ENCODE measurements at regions of chr3 and their contacts with region 1.

Region 1: GRCh38 chr3:28348629-28349483 is at the starts of genes AZI2 and ZCWPW2:
- DNase-seq: peak; percentile 89
- ATAC-seq: peak; percentile 91
- H3K4me3 ChIP-seq: peak within 1 kb of the TSS; percentile 76 to 94 (median 93)
- H3K27ac ChIP-seq: peak within 1 kb of the TSS; percentile 96
- H3K4me1 ChIP-seq: peaks cover 36% of the 10 kb centered on the region
- H3K27me3 ChIP-seq: no peaks in the 10 kb centered on the region
- CTCF ChIP-seq: peak; percentile 61
- EP300 ChIP-seq: no peak
- POLR2A ChIP-seq: peak; percentile 73 to 75
- RAD21 ChIP-seq: no peak; the same call in 1 of the 2 replicates
- total RNA-seq, gene AZI2: 43.7 and 48.4 TPM in 2 replicates
- total RNA-seq, gene ZCWPW2: 0.46 and 0.53 TPM in 2 replicates

Region 2: DNA sequence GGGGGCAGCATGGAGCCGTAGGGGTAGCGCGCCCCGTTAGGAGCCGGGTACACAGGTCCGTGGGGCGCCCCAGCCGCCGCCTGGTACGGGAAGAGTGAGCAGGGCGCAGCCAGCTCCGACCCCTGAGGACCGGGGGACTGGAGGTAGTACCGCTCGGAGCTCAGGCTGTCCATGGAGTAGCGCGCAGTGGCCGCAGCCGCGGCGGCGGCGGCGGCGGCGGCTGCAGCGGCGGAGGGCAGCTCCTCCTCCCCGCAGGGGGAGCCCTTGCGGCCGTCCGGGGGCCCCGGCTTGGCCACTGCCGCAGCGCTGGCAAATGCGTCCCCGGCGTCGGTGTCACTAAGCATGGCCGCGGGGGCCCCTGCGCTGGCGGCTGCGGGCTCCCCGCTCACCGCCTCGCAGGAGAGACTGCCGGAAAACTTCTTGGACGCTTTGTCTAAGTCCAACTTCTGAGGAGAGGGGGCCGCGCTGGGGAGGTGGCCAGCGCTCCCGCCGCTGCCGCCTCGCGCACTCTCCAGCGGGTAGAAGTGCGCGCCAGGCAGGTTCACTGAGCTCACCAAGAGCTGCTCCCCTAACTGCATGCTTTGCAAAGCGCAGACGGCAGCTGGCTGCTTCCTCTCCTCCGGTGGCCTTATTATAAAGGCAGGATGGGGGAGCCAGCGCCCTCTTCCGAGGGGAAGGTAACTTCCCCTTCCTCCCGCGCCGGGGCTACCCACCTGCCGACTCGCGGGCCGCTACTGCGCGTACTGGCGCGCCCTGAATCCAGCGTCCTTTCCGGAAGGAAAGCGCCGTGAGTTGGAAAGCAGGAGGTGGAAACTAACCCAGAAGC is 626.9 kb before region 1 on chr3 and contains the start of gene EOMES:
- CTCF ChIA-PET with region 1: no interaction called
- POLR2A ChIA-PET with region 1: interaction called, 11 read pairs
- in situ Hi-C with region 1: no loop called
- intact Hi-C with region 1: no loop called
- DNase-seq: peak; percentile 30
- ATAC-seq: peak; percentile 92
- H3K4me3 ChIP-seq: peak within 1 kb of the TSS; percentile 65 to 69 (median 66)
- H3K27ac ChIP-seq: no peak within 1 kb of the TSS
- H3K4me1 ChIP-seq: peaks cover 33% of the 10 kb centered on the region
- H3K27me3 ChIP-seq: peaks cover 5 to 69% of the 10 kb centered on the region in 2 experiments
- CTCF ChIP-seq: peak; percentile 64
- EP300 ChIP-seq: no peak
- POLR2A ChIP-seq: no peak
- RAD21 ChIP-seq: peak; percentile 76
- total RNA-seq, gene EOMES: 0.11 and 0.28 TPM in 2 replicates

Region 3: DNA sequence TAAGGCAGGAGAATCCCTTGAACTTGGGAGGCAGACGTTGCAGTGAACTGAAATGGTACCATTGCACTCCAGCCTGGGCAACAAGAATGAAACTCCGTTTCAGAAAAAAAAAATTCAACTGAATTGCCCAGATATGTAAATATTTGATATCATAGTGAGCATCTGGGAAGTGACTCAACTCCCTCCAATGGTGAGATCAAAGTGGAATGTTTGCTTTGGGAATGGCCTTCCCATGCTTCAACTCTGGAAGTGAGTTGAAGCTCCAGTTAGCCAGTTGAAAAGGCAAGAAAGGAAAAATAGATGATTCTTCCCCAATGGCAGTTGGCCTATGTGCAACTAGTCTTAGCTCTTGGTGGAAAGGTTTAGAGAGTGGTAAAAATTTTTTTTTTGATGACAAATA is 239.0 kb before region 1 on chr3:
- CTCF ChIA-PET with region 1: no interaction called
- POLR2A ChIA-PET with region 1: interaction called, 6 read pairs
- in situ Hi-C with region 1: no loop called
- intact Hi-C with region 1: loop called (anchors 10 kb)
- DNase-seq: peak; percentile 78
- ATAC-seq: peak; percentile 81
- H3K4me3 ChIP-seq: no peak overlapping the region
- H3K27ac ChIP-seq: no peak overlapping the region
- H3K4me1 ChIP-seq: peaks cover 32% of the 10 kb centered on the region
- H3K27me3 ChIP-seq: no peaks in the 10 kb centered on the region
- CTCF ChIP-seq: no peak
- EP300 ChIP-seq: peak in 1 of 2 experiments; percentile 73; a peak in 2 of 4 replicates
- POLR2A ChIP-seq: no peak
- RAD21 ChIP-seq: no peak

Measured in HepG2 (cell line).